A673 (cell line): ENCODE measurements at regions of chr22 and their contacts with region 1.

Region 1: GRCh38 chr22:49216579-49216978 is 611.1 kb downstream of the BRD1 start:
- DNase-seq: no peak
- H3K4me3 ChIP-seq: no peak overlapping the region
- H3K27ac ChIP-seq: no peak overlapping the region
- H3K4me1 ChIP-seq: no peaks in the 10 kb centered on the region
- H3K27me3 ChIP-seq: peaks cover 6% of the 10 kb centered on the region
- CTCF ChIP-seq: no peak

Region 2: GRCh38 chr22:47793304-47794101 is 1423.1 kb before region 1 on chr22:
- CTCF ChIA-PET with region 1: interaction called, 11 read pairs
- POLR2A ChIA-PET with region 1: no interaction called
- intact Hi-C with region 1: no loop called
- DNase-seq: no peak
- H3K4me3 ChIP-seq: no peak overlapping the region
- H3K27ac ChIP-seq: no peak overlapping the region
- H3K4me1 ChIP-seq: no peaks in the 10 kb centered on the region
- H3K27me3 ChIP-seq: peaks cover 41% of the 10 kb centered on the region
- CTCF ChIP-seq: no peak

Region 3: DNA sequence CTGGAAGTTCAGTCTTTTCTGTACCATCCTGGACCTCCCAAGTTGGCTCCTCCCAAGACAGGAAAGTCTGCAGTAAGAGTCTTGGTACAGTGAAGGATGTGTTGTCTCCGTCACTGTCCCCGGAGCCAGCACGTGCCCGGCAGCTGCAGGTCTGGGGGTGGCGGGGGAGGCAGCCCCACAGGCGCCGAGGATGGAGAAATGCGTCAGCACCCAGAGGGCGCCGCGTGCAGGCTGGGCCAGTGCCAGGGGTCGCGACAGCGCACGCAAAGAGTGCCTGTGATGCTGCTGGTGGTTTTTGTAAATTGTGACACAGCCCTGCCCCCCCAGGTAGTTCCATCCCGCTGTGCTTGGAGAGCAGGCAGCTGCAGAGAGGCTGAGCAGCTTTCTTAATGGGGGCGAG is 589.4 kb before region 1 on chr22:
- CTCF ChIA-PET with region 1: no interaction called
- POLR2A ChIA-PET with region 1: no interaction called
- intact Hi-C with region 1: no loop called
- DNase-seq: peak; percentile 54
- H3K4me3 ChIP-seq: no peak overlapping the region
- H3K27ac ChIP-seq: peak overlapping the region; percentile 31
- H3K4me1 ChIP-seq: peaks cover 27% of the 10 kb centered on the region
- H3K27me3 ChIP-seq: no peaks in the 10 kb centered on the region
- CTCF ChIP-seq: no peak